SK-N-SH (cell line): ENCODE measurements at regions of chr4 and their contacts with region 1.

Region 1: GRCh38 chr4:185134307-185134869 is 8.7 kb upstream of the SLC25A4 start:
- DNase-seq: peak; percentile 68
- H3K4me3 ChIP-seq: no peak overlapping the region; a peak in 1 of 4 replicates
- H3K27ac ChIP-seq: no peak overlapping the region
- H3K4me1 ChIP-seq: no peaks in the 10 kb centered on the region
- H3K27me3 ChIP-seq: no peaks in the 10 kb centered on the region
- CTCF ChIP-seq: peak; percentile 91
- EP300 ChIP-seq: no peak
- RAD21 ChIP-seq: peak; percentile 89

Region 2: GRCh38 chr4:184775854-184776572 is 358.4 kb before region 1 on chr4:
- CTCF ChIA-PET with region 1: no interaction called
- POLR2A ChIA-PET with region 1: no interaction called
- DNase-seq: no peak
- H3K4me3 ChIP-seq: no peak overlapping the region
- H3K27ac ChIP-seq: no peak overlapping the region
- H3K4me1 ChIP-seq: peaks cover 0 to 9% of the 10 kb centered on the region in 2 experiments; a peak in 1 of 4 replicates
- H3K27me3 ChIP-seq: no peaks in the 10 kb centered on the region
- CTCF ChIP-seq: no peak
- EP300 ChIP-seq: no peak
- RAD21 ChIP-seq: no peak

Region 3: GRCh38 chr4:185005216-185005819 is 129.1 kb before region 1 on chr4:
- CTCF ChIA-PET with region 1: interaction called, 17 read pairs
- POLR2A ChIA-PET with region 1: no interaction called
- DNase-seq: peak; percentile 89
- H3K4me3 ChIP-seq: peak overlapping the region; percentile 4 to 35; a peak in 2 of 4 replicates
- H3K27ac ChIP-seq: no peak overlapping the region
- H3K4me1 ChIP-seq: peaks cover 0 to 5% of the 10 kb centered on the region in 2 experiments; a peak in 1 of 4 replicates
- H3K27me3 ChIP-seq: peaks cover 10% of the 10 kb centered on the region; the same call in 1 of the 2 replicates
- CTCF ChIP-seq: peak; percentile 92
- EP300 ChIP-seq: no peak
- RAD21 ChIP-seq: peak; percentile 82

Region 4: DNA sequence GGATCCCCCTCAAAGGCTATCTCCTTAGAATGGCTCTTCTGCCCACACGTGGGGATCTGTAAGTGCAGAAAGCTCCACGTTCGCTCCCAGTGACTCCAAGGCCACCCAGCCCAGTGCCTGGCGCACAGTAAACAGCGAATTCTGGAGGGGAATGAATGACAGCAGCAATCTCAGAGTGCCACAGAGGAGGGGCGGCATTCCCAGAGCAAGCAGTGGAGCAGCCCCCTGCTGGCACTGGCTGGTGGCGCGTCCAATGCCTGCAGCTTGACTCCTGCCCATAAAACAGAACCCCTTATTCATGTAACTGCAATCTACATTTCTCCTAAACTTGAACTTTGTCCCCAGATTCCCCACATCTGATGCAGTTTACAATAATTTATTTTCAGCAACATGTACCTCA is 123.0 kb before region 1 on chr4:
- CTCF ChIA-PET with region 1: interaction called, 15 read pairs
- POLR2A ChIA-PET with region 1: no interaction called
- DNase-seq: peak; percentile 82
- H3K4me3 ChIP-seq: no peak overlapping the region; a peak in 1 of 4 replicates
- H3K27ac ChIP-seq: no peak overlapping the region
- H3K4me1 ChIP-seq: no peaks in the 10 kb centered on the region; a peak in 1 of 4 replicates
- H3K27me3 ChIP-seq: peaks cover 39% of the 10 kb centered on the region; the same call in 1 of the 2 replicates
- CTCF ChIP-seq: peak; percentile 59
- EP300 ChIP-seq: no peak
- RAD21 ChIP-seq: peak; percentile 60

Region 5: DNA sequence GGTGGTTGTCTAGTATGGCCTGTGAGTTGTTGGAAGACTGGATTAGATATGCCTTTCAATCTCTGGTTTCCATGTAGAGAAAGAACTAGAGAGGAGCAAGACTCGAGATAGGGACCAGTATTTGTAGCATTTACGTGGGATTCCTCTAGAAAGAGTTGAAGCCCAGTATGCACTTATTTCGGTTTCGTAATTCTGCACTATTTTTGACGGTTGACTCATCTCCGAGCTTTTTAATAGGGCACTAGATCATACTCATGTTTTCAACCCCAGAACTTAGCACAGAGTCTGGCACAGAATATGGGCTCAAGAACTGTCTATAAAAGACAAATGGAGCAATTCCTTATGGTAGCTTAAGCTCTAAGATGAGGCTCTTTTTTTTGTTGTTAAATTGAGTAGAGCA is 100.4 kb before region 1 on chr4:
- CTCF ChIA-PET with region 1: interaction called, 105 read pairs
- POLR2A ChIA-PET with region 1: no interaction called
- DNase-seq: no peak
- H3K4me3 ChIP-seq: no peak overlapping the region
- H3K27ac ChIP-seq: no peak overlapping the region
- H3K4me1 ChIP-seq: no peaks in the 10 kb centered on the region
- H3K27me3 ChIP-seq: peaks cover 7% of the 10 kb centered on the region; the same call in 1 of the 2 replicates
- CTCF ChIP-seq: no peak
- EP300 ChIP-seq: no peak
- RAD21 ChIP-seq: no peak

Region 6: DNA sequence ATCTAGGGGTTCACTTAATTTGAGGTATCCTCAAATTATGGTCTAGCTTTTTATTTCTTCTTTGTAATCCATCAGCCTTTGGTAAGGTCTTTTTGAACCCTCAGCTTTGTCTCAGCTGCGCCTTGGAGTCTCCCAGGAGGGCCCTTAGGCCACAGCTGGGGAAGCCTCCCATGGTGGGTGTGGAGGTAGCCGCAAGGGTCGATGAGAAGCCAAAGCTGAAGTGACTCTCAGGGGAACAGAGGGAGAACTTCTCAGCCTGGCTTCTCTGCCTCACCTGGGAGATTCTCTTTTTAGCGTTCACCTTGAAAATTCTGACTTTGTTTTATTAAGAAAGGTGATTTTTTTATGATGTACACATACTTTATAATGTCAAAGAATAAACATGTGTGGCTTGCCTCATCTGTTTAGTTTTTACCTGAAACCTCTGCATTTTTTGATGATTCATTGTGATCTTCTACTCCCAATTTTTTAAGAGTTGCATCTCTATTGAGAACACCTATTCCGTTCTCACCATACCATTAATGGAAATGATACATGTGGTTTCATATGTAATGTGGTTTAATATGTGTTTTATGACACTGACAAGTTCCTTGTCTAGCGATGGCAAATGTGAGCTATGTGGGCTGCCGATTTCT is 17.0 kb before region 1 on chr4:
- CTCF ChIA-PET with region 1: interaction called, 12 read pairs
- POLR2A ChIA-PET with region 1: interaction called, 3 read pairs
- DNase-seq: no peak
- H3K4me3 ChIP-seq: no peak overlapping the region
- H3K27ac ChIP-seq: no peak overlapping the region
- H3K4me1 ChIP-seq: peaks cover 5 to 18% of the 10 kb centered on the region in 2 experiments
- H3K27me3 ChIP-seq: no peaks in the 10 kb centered on the region
- CTCF ChIP-seq: no peak
- EP300 ChIP-seq: no peak
- RAD21 ChIP-seq: no peak

Region 7: GRCh38 chr4:185122681-185123345 is 11.6 kb before region 1 on chr4:
- CTCF ChIA-PET with region 1: interaction called, 12 read pairs
- POLR2A ChIA-PET with region 1: no interaction called
- DNase-seq: no peak
- H3K4me3 ChIP-seq: no peak overlapping the region
- H3K27ac ChIP-seq: no peak overlapping the region
- H3K4me1 ChIP-seq: peaks cover 10 to 12% of the 10 kb centered on the region in 2 experiments; a peak in 1 of 4 replicates
- H3K27me3 ChIP-seq: no peaks in the 10 kb centered on the region
- CTCF ChIP-seq: no peak
- EP300 ChIP-seq: no peak
- RAD21 ChIP-seq: no peak

Region 8: GRCh38 chr4:185242749-185243533 is 108.6 kb after region 1 on chr4:
- CTCF ChIA-PET with region 1: no interaction called
- POLR2A ChIA-PET with region 1: no interaction called
- DNase-seq: no peak
- H3K4me3 ChIP-seq: no peak overlapping the region
- H3K27ac ChIP-seq: peak overlapping the region in 1 of 2 experiments; percentile 41; a peak in 2 of 4 replicates
- H3K4me1 ChIP-seq: peaks cover 9 to 10% of the 10 kb centered on the region in 2 experiments; a peak in 3 of 4 replicates
- H3K27me3 ChIP-seq: no peaks in the 10 kb centered on the region
- CTCF ChIP-seq: no peak
- EP300 ChIP-seq: no peak
- RAD21 ChIP-seq: no peak